ENCODE measurements at regions of chr17 and their contacts with region 1.

Region 1: GRCh38 chr17:36629252-36629847 is 28.0 kb downstream of the MRM1 start:
- DNase-seq: peak; percentile 70
- H3K4me3 Mint-ChIP-seq: no peak overlapping the region
- H3K27ac Mint-ChIP-seq: no peak overlapping the region
- H3K4me1 Mint-ChIP-seq: no peaks in the 10 kb centered on the region
- H3K27me3 Mint-ChIP-seq: peaks cover 16% of the 10 kb centered on the region

Region 2: GRCh38 chr17:36601303-36602029 is 27.9 kb before region 1 on chr17 and contains the start of gene MRM1:
- intact Hi-C with region 1: loop called (anchors 1 kb)
- DNase-seq: peak; percentile 85
- H3K4me3 Mint-ChIP-seq: peak within 1 kb of the TSS; percentile 91
- H3K27ac Mint-ChIP-seq: peak within 1 kb of the TSS; percentile 70
- H3K4me1 Mint-ChIP-seq: peaks cover 38% of the 10 kb centered on the region
- H3K27me3 Mint-ChIP-seq: no peaks in the 10 kb centered on the region
- total RNA-seq, gene MRM1: 21.0 and 22.7 TPM in 2 replicates

Region 3: DNA sequence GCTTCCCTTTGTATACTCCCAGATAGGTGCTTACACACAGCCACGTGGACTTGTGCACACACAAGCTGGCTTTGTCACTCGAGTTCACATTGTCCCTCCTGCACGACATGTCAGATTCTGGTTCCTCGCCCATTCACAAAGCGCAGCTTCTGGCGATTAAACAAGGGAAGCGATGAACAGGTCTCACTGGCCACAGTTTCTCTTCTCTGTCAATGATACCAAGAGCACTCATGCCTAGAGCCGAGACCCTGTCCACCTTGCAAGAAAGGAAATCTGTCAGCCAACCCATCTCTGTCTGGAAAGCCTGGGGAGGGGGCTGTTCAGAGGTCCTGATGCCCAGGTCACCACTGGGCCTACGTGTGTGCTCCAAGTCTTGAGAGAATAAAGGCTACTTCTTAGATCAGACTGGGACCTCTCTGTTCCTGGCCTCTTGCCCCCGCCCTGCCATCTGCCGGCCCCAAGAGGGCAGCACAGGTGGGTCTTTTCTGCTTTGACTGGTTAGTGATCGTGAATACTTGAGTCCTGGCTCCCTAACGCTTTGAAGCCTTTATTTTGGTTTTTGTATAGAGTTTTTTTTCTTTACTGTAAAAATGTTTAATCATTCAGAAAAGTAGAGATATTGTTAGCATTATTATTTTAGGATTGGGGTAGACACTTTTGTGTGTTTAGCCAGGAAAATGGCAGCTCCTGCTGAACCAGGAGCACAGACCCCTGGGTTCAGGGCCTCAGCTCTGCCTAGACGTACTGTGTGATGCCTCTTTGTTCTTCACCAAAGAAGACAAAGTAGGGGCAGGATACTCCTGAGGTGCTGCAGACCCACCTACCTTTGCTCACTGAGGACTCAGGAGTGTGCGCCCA is 76.8 kb after region 1 on chr17:
- intact Hi-C with region 1: loop called (anchors 1 kb)
- DNase-seq: peak; percentile 16
- H3K4me3 Mint-ChIP-seq: no peak overlapping the region
- H3K27ac Mint-ChIP-seq: no peak overlapping the region
- H3K4me1 Mint-ChIP-seq: no peaks in the 10 kb centered on the region
- H3K27me3 Mint-ChIP-seq: peaks cover 40% of the 10 kb centered on the region

Region 4: GRCh38 chr17:36755586-36755985 is 126.2 kb after region 1 on chr17:
- intact Hi-C with region 1: loop called (anchors 1 kb)
- DNase-seq: peak; percentile 10
- H3K4me3 Mint-ChIP-seq: no peak overlapping the region
- H3K27ac Mint-ChIP-seq: no peak overlapping the region
- H3K4me1 Mint-ChIP-seq: no peaks in the 10 kb centered on the region
- H3K27me3 Mint-ChIP-seq: peaks cover 4% of the 10 kb centered on the region

Region 5: DNA sequence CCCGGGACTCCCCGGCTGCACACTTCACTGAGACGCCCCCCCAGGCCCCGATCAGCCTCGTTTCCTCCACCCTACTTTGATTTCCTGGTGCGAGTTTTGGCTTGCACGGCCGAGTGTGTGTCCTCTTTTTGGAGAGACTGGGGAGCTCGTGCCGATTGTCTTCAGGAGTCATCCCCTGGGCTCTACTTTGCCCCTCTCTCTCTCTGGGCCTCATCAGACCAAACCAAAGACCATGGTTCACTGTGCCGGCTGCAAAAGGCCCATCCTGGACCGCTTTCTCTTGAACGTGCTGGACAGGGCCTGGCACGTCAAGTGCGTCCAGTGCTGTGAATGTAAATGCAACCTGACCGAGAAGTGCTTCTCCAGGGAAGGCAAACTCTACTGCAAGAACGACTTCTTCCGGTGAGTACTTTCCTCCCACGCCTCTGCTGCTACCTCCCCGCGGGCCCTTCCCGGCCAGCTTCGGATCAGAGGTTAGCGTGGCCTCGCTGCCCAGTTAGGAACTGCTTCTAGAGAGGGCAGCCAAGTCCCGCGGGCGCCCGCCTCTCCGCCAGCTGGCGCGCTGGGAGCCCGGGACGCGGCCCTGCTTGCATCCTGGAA is 308.7 kb after region 1 on chr17:
- intact Hi-C with region 1: loop called (anchors 5 kb)
- DNase-seq: no peak
- H3K4me3 Mint-ChIP-seq: peak overlapping the region; percentile 73
- H3K27ac Mint-ChIP-seq: peak overlapping the region; percentile 79
- H3K4me1 Mint-ChIP-seq: peaks cover 32% of the 10 kb centered on the region
- H3K27me3 Mint-ChIP-seq: peaks cover 70% of the 10 kb centered on the region

Region 6: DNA sequence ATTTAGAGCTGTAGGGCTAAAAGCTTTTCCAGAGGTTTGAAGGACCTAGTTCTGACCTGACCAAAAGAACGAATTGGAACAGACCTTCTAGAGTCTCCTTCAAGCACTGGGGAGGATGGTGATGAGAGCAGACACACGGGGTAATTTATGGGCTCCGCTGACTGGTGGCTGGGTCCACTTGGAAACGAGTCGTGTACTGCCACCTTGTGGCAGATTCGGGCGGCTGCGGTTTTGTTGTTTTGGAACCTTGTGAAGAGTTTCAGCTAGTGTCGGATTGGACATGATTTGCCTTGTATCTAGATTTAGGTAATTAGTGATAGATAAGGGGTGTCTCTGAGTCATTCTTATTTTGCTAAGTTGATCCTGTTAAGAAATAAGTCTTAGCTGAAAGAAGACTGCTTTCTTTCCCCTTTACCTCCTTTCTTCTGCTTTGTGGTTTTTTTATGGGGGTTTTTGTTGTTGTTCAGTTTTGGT is 418.3 kb after region 1 on chr17:
- intact Hi-C with region 1: loop called (anchors 1 kb)
- DNase-seq: peak; percentile 69
- H3K4me3 Mint-ChIP-seq: no peak overlapping the region
- H3K27ac Mint-ChIP-seq: peak overlapping the region; percentile 4
- H3K4me1 Mint-ChIP-seq: peaks cover 15% of the 10 kb centered on the region
- H3K27me3 Mint-ChIP-seq: no peaks in the 10 kb centered on the region

Region 7: GRCh38 chr17:37239690-37240334 is 610.5 kb after region 1 on chr17:
- intact Hi-C with region 1: loop called (anchors 5 kb)
- DNase-seq: no peak
- H3K4me3 Mint-ChIP-seq: no peak overlapping the region
- H3K27ac Mint-ChIP-seq: no peak overlapping the region
- H3K4me1 Mint-ChIP-seq: no peaks in the 10 kb centered on the region
- H3K27me3 Mint-ChIP-seq: no peaks in the 10 kb centered on the region

Measured in activated T-helper 1 cell treated with anti-CD3 and anti-CD28 coated beads, Interleukin-12 subunit alpha, Interleukin-12 subunit beta, Interleukin-2, Interleukin-4 antibody, amounts not matched to agents 30 ng/mL and 10 ng/mL and 1 ng/mL, durations not matched to agents 14 hours and 24 hours and 36 hours (primary cell).